ENCODE measurements at regions of chr4 and their contacts with region 1.

Region 1: GRCh38 chr4:75724066-75724866 is at the start of gene USO1:
- DNase-seq: peak; percentile 98 to 100 (median 99)
- ATAC-seq: peak; percentile 89
- H3K4me3 Mint-ChIP-seq: peak within 1 kb of the TSS; percentile 92 to 100 (median 99)
- H3K27ac Mint-ChIP-seq: peak within 1 kb of the TSS; percentile 94 to 100 (median 98)
- H3K4me1 Mint-ChIP-seq: peaks cover 24 to 62% (median 45%) of the 10 kb centered on the region in 4 donors
- H3K27me3 Mint-ChIP-seq: no peaks in the 10 kb centered on the region
- polyA plus RNA-seq, gene USO1: 22.0 to 26.5 (median 24.4) TPM

Region 2: GRCh38 chr4:75514131-75514948 is 209.9 kb before region 1 on chr4 and contains the starts of genes RCHY1 and THAP6:
- POLR2A ChIA-PET with region 1: interaction called, 13 read pairs
- DNase-seq: peak; percentile 78 to 95 (median 92)
- ATAC-seq: peak; percentile 85 to 89
- H3K4me3 Mint-ChIP-seq: peak within 1 kb of the TSS in 1 of 10 donors; percentile 100
- H3K27ac Mint-ChIP-seq: peak within 1 kb of the TSS in 6 of 10 donors; percentile 98 to 100 (median 100)
- H3K4me1 Mint-ChIP-seq: peaks cover 20 to 54% (median 44%) of the 10 kb centered on the region in 4 donors
- H3K27me3 Mint-ChIP-seq: no peaks in the 10 kb centered on the region
- polyA plus RNA-seq, gene RCHY1: 13.3 to 27.3 (median 25.3) TPM
- polyA plus RNA-seq, gene THAP6: 8.2 to 12.4 (median 11.9) TPM

Region 3: GRCh38 chr4:75593393-75593792 is 130.9 kb before region 1 on chr4:
- POLR2A ChIA-PET with region 1: no interaction called
- DNase-seq: no peak
- ATAC-seq: no peak
- H3K4me3 Mint-ChIP-seq: no peak overlapping the region
- H3K27ac Mint-ChIP-seq: no peak overlapping the region
- H3K4me1 Mint-ChIP-seq: peaks cover 0 to 2% (median 0%) of the 10 kb centered on the region in 4 donors
- H3K27me3 Mint-ChIP-seq: no peaks in the 10 kb centered on the region

Region 4: DNA sequence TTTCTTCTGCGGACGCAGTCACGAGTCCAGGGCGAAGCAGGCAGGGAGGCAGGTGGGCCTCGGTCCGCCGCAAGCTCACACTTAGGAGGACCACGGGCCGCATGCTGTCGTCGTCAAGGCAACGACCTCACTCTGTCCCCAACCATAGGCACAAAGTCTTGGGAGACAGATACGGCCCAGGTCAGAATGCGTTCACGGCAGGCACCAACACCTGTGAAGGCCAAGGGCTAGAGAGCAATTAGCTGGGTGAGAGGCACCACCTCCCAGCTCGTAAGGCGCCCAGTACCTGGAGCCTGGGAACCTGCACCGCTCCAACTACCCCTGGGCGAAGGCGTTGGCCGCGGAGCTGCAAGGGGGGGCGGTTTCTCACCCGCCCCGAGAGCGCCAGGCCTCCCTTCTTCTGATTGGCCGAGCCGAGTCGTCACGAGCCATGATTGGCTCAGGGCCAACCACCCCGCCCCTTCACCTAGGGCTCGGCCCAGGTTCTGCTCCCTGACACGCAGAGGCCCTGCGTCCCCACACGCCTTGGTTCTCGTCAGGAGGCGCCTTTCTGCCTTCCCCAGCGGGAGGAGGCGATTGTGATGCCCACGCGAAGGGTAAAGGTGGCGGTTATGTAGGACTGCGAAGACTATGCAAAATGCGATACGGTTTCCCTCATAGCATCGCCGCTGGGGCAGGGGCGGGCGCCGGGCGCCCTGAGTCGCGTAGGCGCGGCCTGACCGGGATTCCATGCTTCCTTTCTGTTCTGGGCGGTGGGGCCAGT is 93.9 kb before region 1 on chr4 and contains the start of gene CDKL2:
- POLR2A ChIA-PET with region 1: interaction called, 19 read pairs
- DNase-seq: peak; percentile 90 to 96 (median 92)
- ATAC-seq: peak; percentile 98 to 99
- H3K4me3 Mint-ChIP-seq: peak within 1 kb of the TSS; percentile 85 to 99 (median 91)
- H3K27ac Mint-ChIP-seq: peak within 1 kb of the TSS; percentile 16 to 96 (median 92)
- H3K4me1 Mint-ChIP-seq: peaks cover 8 to 14% (median 10%) of the 10 kb centered on the region in 4 donors
- H3K27me3 Mint-ChIP-seq: peaks cover 0 to 1% (median 0%) of the 10 kb centered on the region in 5 donors
- polyA plus RNA-seq, gene CDKL2: 0.20 to 1.0 (median 0.58) TPM

Region 5: DNA sequence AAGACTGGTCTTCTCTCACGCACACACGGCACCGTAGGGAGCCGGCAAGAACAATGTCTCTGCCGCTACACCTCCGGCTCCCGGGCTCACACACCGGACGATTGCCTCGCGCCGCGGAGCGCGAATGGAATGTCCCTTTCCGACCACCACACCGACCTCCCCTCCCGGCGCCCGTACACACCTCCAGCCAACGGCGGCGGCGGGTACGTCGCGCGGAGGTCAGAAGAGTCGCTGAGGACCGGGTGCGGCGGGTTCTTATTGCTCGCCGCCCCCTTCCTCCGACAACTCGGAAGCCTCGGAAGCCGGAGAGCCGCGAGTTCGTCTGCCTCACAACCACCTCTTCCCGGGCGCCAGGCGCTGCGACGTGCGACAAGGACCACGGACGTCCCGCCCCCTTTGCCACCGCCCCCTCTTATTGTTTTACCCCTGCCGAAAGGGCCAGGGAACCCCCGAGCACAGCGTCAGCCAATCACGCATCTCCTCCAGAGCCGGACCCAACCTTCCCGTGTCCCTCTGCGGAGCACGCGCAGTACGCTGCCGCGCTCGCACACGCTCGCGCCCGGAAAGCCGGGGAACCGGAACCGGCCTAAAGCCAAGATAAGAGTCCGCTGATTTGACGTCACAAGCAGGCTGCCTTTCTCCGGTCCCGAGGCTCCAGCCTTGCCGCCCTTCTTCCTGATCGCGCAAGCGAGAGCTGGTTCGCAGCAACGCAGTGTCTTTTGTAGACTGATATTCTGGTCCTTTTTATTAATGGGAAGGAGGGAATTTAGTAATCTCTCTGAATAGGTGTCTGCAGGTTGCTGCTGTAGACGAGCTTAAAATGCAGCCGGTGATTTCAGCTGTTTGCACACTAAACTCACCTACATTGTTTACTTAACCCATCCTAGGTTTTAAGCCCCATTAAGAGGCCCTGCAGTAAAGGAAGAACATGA is 51.0 kb before region 1 on chr4 and contains the start of gene G3BP2:
- POLR2A ChIA-PET with region 1: interaction called, 77 read pairs
- DNase-seq: peak; percentile 89 to 99 (median 97)
- ATAC-seq: peak; percentile 90 to 91
- H3K4me3 Mint-ChIP-seq: peak within 1 kb of the TSS; percentile 95 to 100 (median 99)
- H3K27ac Mint-ChIP-seq: peak within 1 kb of the TSS; percentile 97 to 100 (median 99)
- H3K4me1 Mint-ChIP-seq: peaks cover 41 to 48% (median 46%) of the 10 kb centered on the region in 4 donors
- H3K27me3 Mint-ChIP-seq: no peaks in the 10 kb centered on the region
- polyA plus RNA-seq, gene G3BP2: 116 to 125 (median 121) TPM

Region 6: GRCh38 chr4:75686346-75686745 is 37.9 kb before region 1 on chr4:
- POLR2A ChIA-PET with region 1: interaction called, 12 read pairs
- DNase-seq: peak in 8 of 10 donors; percentile 12 to 66 (median 41)
- ATAC-seq: peak; percentile 74 to 85
- H3K4me3 Mint-ChIP-seq: peak overlapping the region in 9 of 10 donors; percentile 5 to 78 (median 52)
- H3K27ac Mint-ChIP-seq: peak overlapping the region; percentile 28 to 91 (median 76)
- H3K4me1 Mint-ChIP-seq: peaks cover 20 to 56% (median 50%) of the 10 kb centered on the region in 4 donors
- H3K27me3 Mint-ChIP-seq: no peaks in the 10 kb centered on the region

Region 7: GRCh38 chr4:75940692-75941253 is 216.5 kb after region 1 on chr4 and contains the start of gene NAAA:
- POLR2A ChIA-PET with region 1: interaction called, 10 read pairs
- DNase-seq: peak; percentile 60 to 89 (median 74)
- ATAC-seq: peak; percentile 85
- H3K4me3 Mint-ChIP-seq: peak within 1 kb of the TSS; percentile 94 to 99 (median 97)
- H3K27ac Mint-ChIP-seq: peak within 1 kb of the TSS; percentile 70 to 99 (median 96)
- H3K4me1 Mint-ChIP-seq: peaks cover 6 to 30% (median 24%) of the 10 kb centered on the region in 4 donors
- H3K27me3 Mint-ChIP-seq: no peaks in the 10 kb centered on the region
- polyA plus RNA-seq, gene NAAA: 63.1 to 87.9 (median 63.4) TPM